Naive thymus-derived CD4-positive, alpha-beta T cell (primary cell): ENCODE measurements at regions of chr12 and their contacts with region 1.

Region 1: GRCh38 chr12:21642707-21643389 is 14.8 kb downstream of the LDHB start:
- DNase-seq: no peak
- ATAC-seq: no peak
- H3K4me3 ChIP-seq: no peak overlapping the region
- H3K4me3 Mint-ChIP-seq: peak overlapping the region in 8 of 10 donors; percentile 12 to 89 (median 44)
- H3K27ac ChIP-seq: peak overlapping the region; percentile 47
- H3K27ac Mint-ChIP-seq: peak overlapping the region in 8 of 9 donors; percentile 8 to 89 (median 76)
- H3K4me1 ChIP-seq: peaks cover 11 to 64% of the 10 kb centered on the region in 2 donors
- H3K4me1 Mint-ChIP-seq: peaks cover 53 to 98% (median 91%) of the 10 kb centered on the region in 7 donors
- H3K27me3 ChIP-seq: no peaks in the 10 kb centered on the region
- H3K27me3 Mint-ChIP-seq: no peaks in the 10 kb centered on the region

Region 2: DNA sequence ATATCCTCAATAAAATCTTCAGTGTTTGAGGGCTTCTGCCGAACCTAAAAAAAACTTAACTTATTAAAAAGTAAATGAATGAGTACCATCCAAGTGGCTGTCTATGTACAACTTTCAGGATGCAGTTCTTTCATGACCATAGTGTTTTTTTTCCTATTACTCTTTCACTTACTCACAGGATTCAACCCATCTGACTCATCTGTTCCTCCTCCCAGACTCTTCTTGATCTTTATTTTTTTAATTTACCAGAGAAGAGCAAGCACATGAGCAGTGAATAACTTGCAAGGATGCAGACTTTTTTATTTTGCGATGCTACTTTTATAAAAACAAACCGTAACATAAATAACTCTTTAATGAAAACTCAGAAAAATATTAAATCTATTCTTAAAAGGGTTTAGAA is 165.9 kb before region 1 on chr12:
- CTCF ChIA-PET with region 1: no interaction called
- POLR2A ChIA-PET with region 1: no interaction called
- intact Hi-C with region 1: loop called in 1 of 2 experiments (anchors 5 kb)
- DNase-seq: no peak
- ATAC-seq: no peak
- H3K4me3 ChIP-seq: no peak overlapping the region
- H3K4me3 Mint-ChIP-seq: no peak overlapping the region
- H3K27ac ChIP-seq: no peak overlapping the region
- H3K27ac Mint-ChIP-seq: peak overlapping the region in 3 of 9 donors; percentile 39 to 73 (median 46)
- H3K4me1 ChIP-seq: no peaks in the 10 kb centered on the region
- H3K4me1 Mint-ChIP-seq: peaks cover 0 to 15% (median 0%) of the 10 kb centered on the region in 7 donors
- H3K27me3 ChIP-seq: no peaks in the 10 kb centered on the region
- H3K27me3 Mint-ChIP-seq: no peaks in the 10 kb centered on the region

Region 3: DNA sequence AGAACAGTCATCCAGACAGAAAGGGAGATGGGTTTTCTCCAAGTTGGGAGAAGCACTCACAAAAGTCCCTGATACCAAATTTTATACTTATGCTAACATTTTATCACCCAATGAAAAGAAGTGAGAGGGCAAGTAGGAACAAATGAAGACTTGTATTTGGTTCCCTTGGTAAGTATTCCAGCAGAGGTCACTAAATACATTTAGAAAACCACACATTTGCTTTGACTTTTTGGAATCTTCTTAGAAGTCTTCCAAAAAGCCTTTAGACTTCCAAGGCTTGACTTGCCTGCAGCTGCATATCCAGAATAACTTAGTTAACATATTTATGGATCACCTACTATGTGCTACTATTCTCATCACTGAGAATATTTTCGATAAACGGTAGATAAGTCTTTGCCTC is 35.1 kb before region 1 on chr12:
- CTCF ChIA-PET with region 1: interaction called, 14 read pairs
- POLR2A ChIA-PET with region 1: interaction called, 4 read pairs
- intact Hi-C with region 1: loop called in 1 of 2 experiments (anchors 5 kb)
- DNase-seq: peak in 6 of 9 donors; percentile 14 to 57 (median 43)
- ATAC-seq: no peak
- H3K4me3 ChIP-seq: no peak overlapping the region
- H3K4me3 Mint-ChIP-seq: no peak overlapping the region
- H3K27ac ChIP-seq: no peak overlapping the region
- H3K27ac Mint-ChIP-seq: no peak overlapping the region
- H3K4me1 ChIP-seq: peaks cover 0 to 10% of the 10 kb centered on the region in 2 donors
- H3K4me1 Mint-ChIP-seq: peaks cover 2 to 8% (median 7%) of the 10 kb centered on the region in 7 donors
- H3K27me3 ChIP-seq: no peaks in the 10 kb centered on the region
- H3K27me3 Mint-ChIP-seq: peaks cover 0 to 7% (median 0%) of the 10 kb centered on the region in 5 donors

Region 4: DNA sequence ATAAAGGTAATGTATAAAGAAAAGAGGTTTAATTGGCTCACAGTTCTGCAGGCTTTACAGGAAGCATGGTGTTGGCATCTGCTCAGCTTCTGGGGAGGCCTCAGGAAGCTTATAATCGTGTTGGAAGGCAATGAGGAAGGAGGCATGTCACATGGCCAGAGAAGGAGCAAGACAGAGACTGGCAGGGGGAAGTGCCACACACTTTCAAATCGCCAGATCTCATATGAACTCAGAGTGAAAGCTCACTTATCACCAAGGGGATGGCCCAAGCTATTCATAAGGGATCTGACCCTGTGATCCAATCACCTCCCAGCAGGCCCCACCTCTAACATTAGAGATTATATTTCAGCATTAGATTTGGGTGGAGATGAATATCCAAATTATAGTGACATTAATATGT is 11.5 kb before region 1 on chr12:
- CTCF ChIA-PET with region 1: interaction called, 3 read pairs
- POLR2A ChIA-PET with region 1: interaction called, 16 read pairs
- intact Hi-C with region 1: loop called in 1 of 2 experiments (anchors 1 kb)
- DNase-seq: no peak
- ATAC-seq: no peak
- H3K4me3 ChIP-seq: no peak overlapping the region
- H3K4me3 Mint-ChIP-seq: peak overlapping the region in 1 of 10 donors; percentile 13
- H3K27ac ChIP-seq: no peak overlapping the region
- H3K27ac Mint-ChIP-seq: peak overlapping the region in 6 of 9 donors; percentile 49 to 76 (median 64)
- H3K4me1 ChIP-seq: no peaks in the 10 kb centered on the region
- H3K4me1 Mint-ChIP-seq: peaks cover 0 to 35% (median 16%) of the 10 kb centered on the region in 7 donors
- H3K27me3 ChIP-seq: no peaks in the 10 kb centered on the region
- H3K27me3 Mint-ChIP-seq: no peaks in the 10 kb centered on the region

Region 5: GRCh38 chr12:21683115-21683514 is 40.3 kb after region 1 on chr12:
- CTCF ChIA-PET with region 1: interaction called, 15 read pairs
- POLR2A ChIA-PET with region 1: interaction called, 242 read pairs
- intact Hi-C with region 1: loop called (anchors 5 kb)
- DNase-seq: no peak
- ATAC-seq: no peak
- H3K4me3 ChIP-seq: no peak overlapping the region
- H3K4me3 Mint-ChIP-seq: no peak overlapping the region
- H3K27ac ChIP-seq: no peak overlapping the region
- H3K27ac Mint-ChIP-seq: peak overlapping the region in 1 of 9 donors; percentile 37
- H3K4me1 ChIP-seq: peaks cover 0 to 24% of the 10 kb centered on the region in 2 donors
- H3K4me1 Mint-ChIP-seq: peaks cover 9 to 25% (median 20%) of the 10 kb centered on the region in 7 donors
- H3K27me3 ChIP-seq: no peaks in the 10 kb centered on the region
- H3K27me3 Mint-ChIP-seq: peaks cover 0 to 8% (median 0%) of the 10 kb centered on the region in 5 donors